Kidney (tissue), 22 donors: ENCODE measurements at regions of chr17 and their contacts with region 1.

Region 1: DNA sequence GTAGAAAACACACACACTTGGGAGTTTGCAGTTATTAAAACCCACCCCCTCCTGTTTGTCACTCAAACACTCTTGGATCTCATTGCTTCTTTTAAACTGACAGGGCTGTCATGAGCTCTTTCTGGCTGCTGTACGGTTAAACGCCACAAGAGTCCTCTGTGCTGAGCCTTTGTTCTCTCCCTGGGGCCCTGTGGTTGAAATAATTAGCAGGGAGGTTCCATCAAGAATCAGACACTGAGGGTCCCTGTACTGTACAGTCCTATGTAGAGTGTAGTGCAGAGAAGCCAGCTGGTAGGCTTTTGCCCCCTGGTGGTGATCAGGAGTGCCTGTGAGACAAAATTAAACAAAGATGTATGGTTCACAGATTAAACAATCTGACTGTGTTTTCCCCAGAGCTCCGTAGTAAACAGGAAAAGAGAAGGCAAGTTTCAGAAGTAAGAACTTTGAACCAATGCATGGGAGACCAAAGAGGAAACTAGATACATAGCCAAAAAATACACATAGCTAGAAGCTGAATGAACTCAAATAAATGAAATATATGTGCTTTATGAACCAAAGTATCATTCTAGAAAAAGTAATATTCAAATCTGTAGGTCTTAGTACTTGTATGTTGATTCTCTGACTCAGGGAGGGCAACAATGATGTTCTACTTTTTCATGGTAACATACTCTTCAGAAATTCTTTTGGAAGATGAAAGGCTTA is 1.4 kb upstream of the SSH2 start:
- DNase-seq: peak in 4 of 5 donors; percentile 79 to 94 (median 86)
- H3K4me3 ChIP-seq: peak overlapping the region in 2 of 3 donors; percentile 89 to 97
- H3K27ac ChIP-seq: no peak overlapping the region
- H3K4me1 ChIP-seq: peaks cover 0 to 12% (median 6%) of the 10 kb centered on the region in 3 donors
- H3K27me3 ChIP-seq: no peaks in the 10 kb centered on the region
- CTCF ChIP-seq: peak; percentile 90

Region 2: DNA sequence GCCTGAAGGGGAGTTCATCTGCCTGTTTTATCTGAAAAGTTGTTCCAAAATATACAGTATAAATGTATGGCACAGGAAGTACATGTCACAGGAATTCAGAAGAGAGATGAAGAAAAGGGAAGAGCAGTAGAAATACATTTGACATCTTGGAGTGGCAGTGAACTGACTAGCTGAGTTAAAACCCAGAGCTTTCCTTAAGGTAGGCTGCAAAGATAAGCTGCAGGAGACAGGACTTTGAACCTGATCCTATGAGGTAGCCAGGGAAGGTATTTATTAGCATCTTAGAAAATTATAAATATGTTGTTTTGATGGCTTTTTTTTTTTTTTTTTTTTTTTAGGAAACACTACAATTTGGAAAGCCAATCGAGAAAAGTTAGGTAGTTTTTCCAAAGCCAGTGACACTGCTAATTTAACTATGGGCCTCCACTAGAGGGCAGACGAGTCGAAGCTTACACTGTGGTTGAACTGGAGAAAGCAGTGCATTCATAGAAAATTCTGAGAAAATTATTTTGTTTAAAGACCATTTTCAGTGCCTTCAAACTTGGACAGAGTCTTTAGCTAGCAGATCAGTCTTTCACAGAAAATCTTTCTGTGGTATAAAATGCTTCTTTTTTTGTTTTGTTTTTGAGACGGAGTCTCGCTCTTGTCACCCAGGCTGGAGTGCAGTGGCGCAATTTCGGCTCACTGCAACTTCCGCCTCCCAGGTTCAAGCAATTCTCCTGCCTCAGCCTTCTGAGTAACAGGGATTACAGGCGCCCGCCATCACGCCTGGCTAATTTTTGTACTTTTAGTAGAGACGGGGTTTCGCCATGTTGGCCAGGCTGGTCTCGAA is 123.6 kb before region 1 on chr17:
- intact Hi-C with region 1: loop called (anchors 5 kb)
- DNase-seq: peak in 4 of 5 donors; percentile 60 to 89 (median 80)
- H3K4me3 ChIP-seq: no peak overlapping the region
- H3K27ac ChIP-seq: no peak overlapping the region
- H3K4me1 ChIP-seq: no peaks in the 10 kb centered on the region
- H3K27me3 ChIP-seq: no peaks in the 10 kb centered on the region
- CTCF ChIP-seq: peak; percentile 89

Region 3: GRCh38 chr17:30173649-30174048 is 242.3 kb after region 1 on chr17:
- intact Hi-C with region 1: no loop called
- DNase-seq: no peak
- H3K4me3 ChIP-seq: no peak overlapping the region
- H3K27ac ChIP-seq: no peak overlapping the region
- H3K4me1 ChIP-seq: no peaks in the 10 kb centered on the region
- H3K27me3 ChIP-seq: no peaks in the 10 kb centered on the region
- CTCF ChIP-seq: no peak